GM10248 (cell line): ENCODE measurements at regions of chr14 and their contacts with region 1.

Region 1: DNA sequence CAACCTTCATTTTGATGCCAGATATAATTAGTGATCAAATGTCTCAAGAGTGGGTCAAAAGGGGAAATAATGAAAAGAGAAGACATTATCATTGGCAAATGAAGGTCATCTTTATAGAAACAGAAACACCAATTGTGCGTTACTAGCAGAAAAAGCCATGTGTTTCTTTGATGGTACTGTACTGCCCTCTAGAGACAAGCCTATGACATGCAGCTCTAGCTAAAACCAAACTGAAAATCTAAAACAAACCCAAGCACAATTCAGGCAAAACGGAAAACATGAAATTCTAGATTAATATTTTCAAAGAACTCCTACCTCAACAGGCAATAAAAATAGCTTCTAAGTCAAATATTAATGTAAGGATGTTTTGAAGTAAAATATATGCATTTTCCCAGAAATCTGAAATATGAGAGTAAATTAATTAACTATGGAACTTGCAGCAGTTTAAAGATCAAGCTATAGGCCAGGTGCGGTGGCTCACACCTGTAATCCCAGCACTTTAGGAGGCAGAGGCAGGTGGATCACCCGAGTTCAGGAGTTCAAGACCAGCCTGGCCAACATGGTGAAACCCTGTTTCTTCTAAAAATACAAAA is 115.4 kb downstream of the KLHL28 start:
- DNase-seq: peak; percentile 45
- CTCF ChIP-seq: peak; percentile 90

Region 2: GRCh38 chr14:44866322-44866721 is 20.0 kb after region 1 on chr14:
- CTCF ChIA-PET with region 1: interaction called, 10 read pairs
- POLR2A ChIA-PET with region 1: no interaction called
- DNase-seq: no peak
- CTCF ChIP-seq: no peak

Region 3: DNA sequence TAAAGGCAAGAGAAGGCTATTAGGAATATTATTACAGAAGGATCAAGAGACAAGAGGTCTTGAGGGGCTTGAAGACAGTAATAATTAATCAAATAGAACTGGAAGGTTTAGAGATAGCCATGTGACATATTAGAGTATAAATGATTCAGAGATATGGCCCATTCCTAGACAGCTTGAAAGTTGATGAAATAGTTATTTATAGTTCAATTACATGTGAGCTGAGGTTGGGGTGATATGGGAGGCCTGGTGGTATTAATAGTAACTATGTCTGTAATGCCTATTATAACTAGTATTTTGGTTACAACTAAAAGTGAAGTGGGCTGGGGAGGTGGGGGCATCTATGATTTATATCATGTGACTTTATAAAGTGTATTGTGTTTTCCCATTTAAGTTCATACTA is 420.7 kb after region 1 on chr14:
- CTCF ChIA-PET with region 1: interaction called, 10 read pairs
- POLR2A ChIA-PET with region 1: no interaction called
- DNase-seq: no peak
- CTCF ChIP-seq: no peak